PC-9 (cell line): ENCODE measurements at regions of chr14 and their contacts with region 1.

Region 1: DNA sequence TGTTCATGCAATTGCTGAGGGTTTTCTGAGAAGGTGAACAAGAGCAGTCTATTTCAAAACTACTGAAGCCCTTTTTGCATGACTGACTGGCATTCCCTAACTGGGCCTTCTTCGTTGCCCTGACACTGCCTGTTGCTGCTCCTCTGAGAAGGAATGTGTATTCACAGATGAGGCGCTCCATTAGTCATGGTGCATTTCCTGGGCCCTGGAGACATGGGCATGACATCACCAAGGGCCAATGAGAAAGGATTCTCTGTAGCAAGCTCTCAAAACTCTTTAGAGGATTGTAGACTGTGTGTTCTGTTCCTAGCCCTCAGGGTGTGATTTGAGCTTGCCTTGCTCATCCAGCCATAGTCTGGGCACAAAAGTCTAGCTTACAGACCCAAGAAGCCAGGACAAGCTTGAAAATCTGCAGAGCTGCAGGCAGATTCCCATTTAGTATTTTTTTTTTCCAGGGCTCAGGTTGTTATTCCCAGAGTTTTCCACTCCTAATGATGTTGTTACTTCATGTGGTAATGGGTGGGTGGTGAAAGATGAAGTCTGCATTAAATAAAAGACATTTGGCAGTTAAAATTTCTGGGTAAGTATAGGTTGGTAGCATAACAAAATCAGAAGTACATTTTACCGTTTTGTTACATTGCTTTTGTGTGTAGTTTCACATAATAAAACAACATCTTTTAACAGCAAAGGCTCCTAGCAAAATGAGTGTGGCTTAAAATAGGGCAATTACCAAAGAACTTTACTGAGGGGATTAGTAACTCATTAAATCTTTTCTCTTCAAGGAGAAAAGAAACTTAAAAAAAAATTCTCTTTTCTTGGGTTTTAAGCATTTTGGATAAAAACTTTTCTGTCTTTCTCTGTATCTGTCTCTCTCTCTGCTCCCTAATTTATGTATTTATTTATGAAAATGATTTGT is 318.4 kb downstream of the RAD51B start:
- DNase-seq: peak; percentile 88 to 92
- H3K4me3 ChIP-seq: no peak overlapping the region
- H3K27ac ChIP-seq: peak overlapping the region; percentile 57
- H3K4me1 ChIP-seq: peaks cover 58% of the 10 kb centered on the region
- H3K27me3 ChIP-seq: no peaks in the 10 kb centered on the region
- CTCF ChIP-seq: no peak

Region 2: DNA sequence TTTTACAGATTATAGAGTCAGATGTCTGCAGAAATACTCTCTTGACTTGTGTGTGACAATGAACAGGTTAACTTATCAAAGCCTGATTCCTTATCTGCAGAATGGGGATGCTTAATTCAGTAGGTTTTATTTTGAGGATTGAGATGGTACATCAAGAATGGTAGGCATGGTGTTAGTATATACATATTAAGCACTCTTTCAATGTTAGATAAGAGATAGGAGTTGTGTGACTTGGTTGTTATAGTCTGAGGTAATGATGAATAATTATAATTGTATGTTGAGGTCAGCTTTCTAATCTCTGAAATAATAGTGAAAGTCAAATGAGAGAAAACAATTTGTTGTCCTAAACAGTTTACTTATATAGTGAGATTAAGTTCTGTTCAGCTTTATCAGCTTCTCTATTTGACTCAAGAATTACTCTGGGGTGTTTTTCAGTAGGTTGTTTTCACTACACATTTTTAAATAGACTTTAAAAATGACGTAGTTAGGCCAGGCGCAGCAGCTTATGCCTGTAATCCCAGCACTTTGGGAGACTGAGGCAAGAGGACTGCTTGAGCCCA is 884.8 kb before region 1 on chr14:
- CTCF ChIA-PET with region 1: no interaction called
- POLR2A ChIA-PET with region 1: no interaction called
- intact Hi-C with region 1: no loop called
- DNase-seq: no peak
- H3K4me3 ChIP-seq: no peak overlapping the region
- H3K27ac ChIP-seq: no peak overlapping the region
- H3K4me1 ChIP-seq: 0 out of 2 replicates have a peak, but pooled peaks cover under 1% of the 10 kb centered on the region
- H3K27me3 ChIP-seq: no peaks in the 10 kb centered on the region
- CTCF ChIP-seq: no peak

Region 3: GRCh38 chr14:67963960-67964744 is 173.8 kb before region 1 on chr14:
- CTCF ChIA-PET with region 1: no interaction called
- POLR2A ChIA-PET with region 1: no interaction called
- intact Hi-C with region 1: loop called (anchors 1 kb)
- DNase-seq: peak; percentile 44 to 95
- H3K4me3 ChIP-seq: peak overlapping the region; percentile 34; the same call in 1 of the 2 replicates
- H3K27ac ChIP-seq: peak overlapping the region; percentile 77
- H3K4me1 ChIP-seq: peaks cover 38% of the 10 kb centered on the region
- H3K27me3 ChIP-seq: no peaks in the 10 kb centered on the region
- CTCF ChIP-seq: no peak

Region 4: GRCh38 chr14:68124979-68125731 is 12.8 kb before region 1 on chr14:
- CTCF ChIA-PET with region 1: no interaction called
- POLR2A ChIA-PET with region 1: interaction called, 11 read pairs
- intact Hi-C with region 1: no loop called
- DNase-seq: peak; percentile 53 to 62
- H3K4me3 ChIP-seq: no peak overlapping the region
- H3K27ac ChIP-seq: peak overlapping the region; percentile 25; the same call in 1 of the 2 replicates
- H3K4me1 ChIP-seq: peaks cover 7% of the 10 kb centered on the region
- H3K27me3 ChIP-seq: no peaks in the 10 kb centered on the region
- CTCF ChIP-seq: no peak

Region 5: GRCh38 chr14:68598621-68599447 is 460.9 kb after region 1 on chr14:
- CTCF ChIA-PET with region 1: no interaction called
- POLR2A ChIA-PET with region 1: no interaction called
- intact Hi-C with region 1: no loop called
- DNase-seq: peak; percentile 51 to 96
- H3K4me3 ChIP-seq: peak overlapping the region; percentile 45; the same call in 1 of the 2 replicates
- H3K27ac ChIP-seq: peak overlapping the region; percentile 94
- H3K4me1 ChIP-seq: peaks cover 46% of the 10 kb centered on the region
- H3K27me3 ChIP-seq: no peaks in the 10 kb centered on the region
- CTCF ChIP-seq: no peak